ENCODE measurements at regions of chr22 and their contacts with region 1.

Region 1: DNA sequence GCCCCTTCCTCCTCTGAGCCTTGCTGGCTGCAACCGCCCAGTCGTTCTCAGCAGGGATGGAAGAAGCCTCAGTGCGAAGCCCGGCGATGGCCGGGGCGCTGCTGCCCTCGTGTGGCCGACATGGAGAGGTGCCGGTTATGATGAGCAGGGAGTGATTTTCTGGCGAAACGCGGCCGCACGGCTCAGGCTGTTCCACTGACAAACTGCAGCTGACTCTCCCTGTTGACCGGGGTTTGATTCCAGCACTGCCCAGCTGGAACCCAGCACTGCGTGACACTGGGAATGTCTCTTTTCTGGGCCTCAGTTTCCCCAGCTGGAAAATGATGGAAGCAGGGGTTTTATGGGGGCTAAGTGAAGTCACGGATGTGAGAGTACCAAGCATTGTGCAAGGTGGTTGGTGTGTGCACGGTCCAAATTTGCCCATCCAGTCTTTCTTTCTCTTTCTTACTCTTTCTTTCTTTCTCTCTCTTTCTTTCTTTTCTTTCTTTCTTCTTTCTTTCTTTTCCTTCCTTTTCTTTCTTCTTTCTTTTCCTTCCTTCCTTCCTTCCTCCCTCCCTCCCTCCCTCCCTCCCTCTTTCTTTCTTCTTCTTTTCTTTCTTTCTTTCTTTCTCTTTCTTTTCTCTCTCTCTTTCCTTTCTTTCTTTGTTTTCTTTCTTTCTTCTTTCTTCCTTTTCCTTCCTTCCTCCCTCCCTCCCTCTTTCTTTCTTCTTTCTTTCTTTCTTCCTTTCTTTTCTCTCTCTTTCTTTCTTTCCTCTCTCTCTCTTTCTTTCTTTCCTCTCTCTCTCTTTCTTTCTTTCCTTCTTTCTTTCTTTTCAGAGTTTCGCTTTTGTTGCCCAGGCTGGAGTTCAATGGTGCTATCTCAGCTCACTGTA is 25.8 kb upstream of the MPPED1 start:
- DNase-seq: peak; percentile 51
- H3K4me3 ChIP-seq: no peak overlapping the region
- H3K27ac ChIP-seq: no peak overlapping the region
- H3K4me1 ChIP-seq: no peaks in the 10 kb centered on the region
- H3K27me3 ChIP-seq: peaks cover 5% of the 10 kb centered on the region
- CTCF ChIP-seq: peak; percentile 71 to 87

Region 2: GRCh38 chr22:43273902-43274484 is 112.0 kb before region 1 on chr22:
- CTCF ChIA-PET with region 1: no interaction called
- dilution Hi-C with region 1: no loop called
- in situ Hi-C with region 1: loop called (anchors 10 kb)
- intact Hi-C with region 1: loop called (anchors 1 kb)
- DNase-seq: peak; percentile 41
- H3K4me3 ChIP-seq: no peak overlapping the region
- H3K27ac ChIP-seq: no peak overlapping the region
- H3K4me1 ChIP-seq: peaks cover 11% of the 10 kb centered on the region
- H3K27me3 ChIP-seq: peaks cover 2% of the 10 kb centered on the region
- CTCF ChIP-seq: peak; percentile 65 to 84

Region 3: DNA sequence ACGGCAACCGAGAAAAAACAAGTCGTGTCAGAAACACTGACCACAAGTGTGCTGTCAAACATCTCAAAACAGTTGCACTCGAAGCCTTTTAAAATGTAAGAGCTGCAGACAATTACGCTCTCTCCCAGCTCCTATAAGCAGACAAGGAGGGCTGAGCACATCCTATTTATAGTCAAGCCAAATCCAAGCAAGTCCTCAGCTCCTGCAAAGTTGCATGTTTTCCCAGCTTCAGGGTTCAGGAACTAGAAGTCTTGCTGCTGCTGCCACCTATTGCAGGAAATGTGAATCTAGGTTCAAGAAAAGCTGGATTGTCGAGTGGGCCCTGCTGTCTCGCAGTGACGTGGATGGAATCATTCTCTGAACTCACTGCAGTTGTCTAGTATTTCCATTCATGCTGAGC is 410.6 kb after region 1 on chr22:
- CTCF ChIA-PET with region 1: no interaction called
- dilution Hi-C with region 1: no loop called
- in situ Hi-C with region 1: loop called (anchors 10 to 25 kb)
- intact Hi-C with region 1: loop called (anchors 1 kb)
- DNase-seq: peak; percentile 20
- H3K4me3 ChIP-seq: no peak overlapping the region
- H3K27ac ChIP-seq: no peak overlapping the region
- H3K4me1 ChIP-seq: no peaks in the 10 kb centered on the region
- H3K27me3 ChIP-seq: no peaks in the 10 kb centered on the region
- CTCF ChIP-seq: peak; percentile 34 to 65

Region 4: GRCh38 chr22:43826142-43827002 is 440.4 kb after region 1 on chr22:
- CTCF ChIA-PET with region 1: no interaction called
- dilution Hi-C with region 1: no loop called
- in situ Hi-C with region 1: loop called in 1 of 2 experiments (anchors 25 kb)
- intact Hi-C with region 1: loop called (anchors 1 kb)
- DNase-seq: peak; percentile 68
- H3K4me3 ChIP-seq: no peak overlapping the region
- H3K27ac ChIP-seq: no peak overlapping the region
- H3K4me1 ChIP-seq: no peaks in the 10 kb centered on the region
- H3K27me3 ChIP-seq: peaks cover 3% of the 10 kb centered on the region
- CTCF ChIP-seq: peak; percentile 19 to 62

Region 5: GRCh38 chr22:44625981-44626687 is 1240.1 kb after region 1 on chr22:
- CTCF ChIA-PET with region 1: no interaction called
- dilution Hi-C with region 1: no loop called
- in situ Hi-C with region 1: no loop called
- intact Hi-C with region 1: loop called (anchors 5 kb)
- DNase-seq: peak; percentile 35
- H3K4me3 ChIP-seq: no peak overlapping the region
- H3K27ac ChIP-seq: no peak overlapping the region
- H3K4me1 ChIP-seq: no peaks in the 10 kb centered on the region
- H3K27me3 ChIP-seq: peaks cover 2% of the 10 kb centered on the region
- CTCF ChIP-seq: peak; percentile 90 to 93